Ascending aorta (tissue), 2 donors: ENCODE measurements at regions of chr6 and their contacts with region 1.

Region 1: GRCh38 chr6:25223490-25223991 is 55.6 kb upstream of the CARMIL1 start:
- DNase-seq: peak in 1 of 2 donors; percentile 76
- H3K4me3 ChIP-seq: peak overlapping the region; percentile 38 to 54
- H3K27ac ChIP-seq: no peak overlapping the region
- H3K4me1 ChIP-seq: no peaks in the 10 kb centered on the region
- H3K27me3 ChIP-seq: no peaks in the 10 kb centered on the region
- CTCF ChIP-seq: peak; percentile 79 to 92 (median 81)

Region 2: DNA sequence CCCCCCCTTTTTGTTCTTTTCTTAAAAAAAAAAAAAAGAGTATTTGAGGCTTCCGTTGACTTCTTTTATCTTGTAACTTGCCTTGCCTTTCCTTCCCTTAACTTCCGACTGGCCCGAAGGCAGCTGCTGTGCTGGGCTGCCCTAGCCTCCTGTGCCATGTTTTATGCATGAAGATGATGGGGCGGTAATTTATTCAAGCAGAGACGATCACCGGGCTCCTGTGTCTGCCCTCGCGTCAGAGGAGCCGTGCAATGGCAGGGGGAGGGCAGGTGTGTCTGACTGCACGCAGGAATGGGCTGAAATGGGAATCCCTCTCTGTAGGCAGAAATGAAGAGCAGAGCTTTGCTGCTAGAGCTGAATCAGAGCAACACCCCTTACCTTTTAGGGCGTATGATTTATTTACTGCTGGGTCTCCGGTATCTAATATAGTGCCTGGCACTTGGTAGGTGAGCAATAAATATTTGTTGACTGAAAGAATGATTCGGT is 181.5 kb before region 1 on chr6:
- intact Hi-C with region 1: no loop called
- DNase-seq: no peak
- H3K4me3 ChIP-seq: no peak overlapping the region
- H3K27ac ChIP-seq: no peak overlapping the region
- H3K4me1 ChIP-seq: no peaks in the 10 kb centered on the region
- H3K27me3 ChIP-seq: no peaks in the 10 kb centered on the region
- CTCF ChIP-seq: no peak

Region 3: DNA sequence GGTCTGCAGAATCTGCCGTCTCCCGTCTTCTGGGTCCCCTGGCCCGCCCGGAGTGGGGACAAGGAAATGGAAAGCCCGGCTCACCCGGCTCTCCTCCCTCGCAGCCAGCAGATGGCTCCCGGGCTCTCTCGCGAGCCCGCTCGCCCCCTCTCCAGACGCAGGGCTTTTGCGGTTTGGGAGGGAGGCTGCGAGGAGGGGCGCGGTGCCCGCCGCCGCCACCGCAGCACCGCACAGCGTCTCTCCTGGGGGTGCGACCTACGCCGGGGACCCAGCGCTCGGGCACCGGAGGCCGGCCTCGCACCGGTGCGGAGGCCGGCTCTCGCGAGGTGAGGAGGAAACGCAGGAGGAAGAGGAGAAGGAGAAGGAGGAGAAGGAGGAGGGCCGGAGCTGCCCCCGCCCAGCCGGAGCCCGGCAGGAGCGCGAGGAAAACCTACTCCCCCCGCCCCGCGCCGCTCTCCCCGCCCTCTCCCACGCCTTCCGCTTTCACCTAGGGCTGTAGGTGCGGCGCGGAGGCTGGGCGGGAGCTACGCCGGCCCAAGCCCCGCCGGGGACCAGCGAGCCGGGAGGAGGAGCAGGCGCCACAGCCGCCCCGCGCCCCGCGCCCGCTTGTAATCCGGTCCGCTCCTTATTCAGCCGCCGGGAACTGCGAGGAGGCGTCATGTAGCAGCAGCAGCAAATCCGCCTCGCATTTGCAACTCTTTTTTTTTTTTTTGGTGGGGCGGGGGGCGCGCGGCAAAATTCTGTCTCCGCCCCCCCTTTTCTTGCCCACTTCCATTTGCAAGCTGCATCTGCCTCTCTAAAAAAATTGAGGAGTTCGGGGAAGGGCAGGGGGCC is 55.6 kb after region 1 on chr6 and contains the start of gene CARMIL1:
- intact Hi-C with region 1: loop called (anchors 1 kb)
- DNase-seq: peak; percentile 24 to 88
- H3K4me3 ChIP-seq: peak within 1 kb of the TSS; percentile 67 to 89
- H3K27ac ChIP-seq: peak within 1 kb of the TSS; percentile 71 to 79
- H3K4me1 ChIP-seq: peaks cover 0 to 19% of the 10 kb centered on the region in 2 donors
- H3K27me3 ChIP-seq: no peaks in the 10 kb centered on the region
- CTCF ChIP-seq: peak; percentile 88 to 90 (median 89)
- total RNA-seq, gene CARMIL1: 16.1 TPM

Region 4: DNA sequence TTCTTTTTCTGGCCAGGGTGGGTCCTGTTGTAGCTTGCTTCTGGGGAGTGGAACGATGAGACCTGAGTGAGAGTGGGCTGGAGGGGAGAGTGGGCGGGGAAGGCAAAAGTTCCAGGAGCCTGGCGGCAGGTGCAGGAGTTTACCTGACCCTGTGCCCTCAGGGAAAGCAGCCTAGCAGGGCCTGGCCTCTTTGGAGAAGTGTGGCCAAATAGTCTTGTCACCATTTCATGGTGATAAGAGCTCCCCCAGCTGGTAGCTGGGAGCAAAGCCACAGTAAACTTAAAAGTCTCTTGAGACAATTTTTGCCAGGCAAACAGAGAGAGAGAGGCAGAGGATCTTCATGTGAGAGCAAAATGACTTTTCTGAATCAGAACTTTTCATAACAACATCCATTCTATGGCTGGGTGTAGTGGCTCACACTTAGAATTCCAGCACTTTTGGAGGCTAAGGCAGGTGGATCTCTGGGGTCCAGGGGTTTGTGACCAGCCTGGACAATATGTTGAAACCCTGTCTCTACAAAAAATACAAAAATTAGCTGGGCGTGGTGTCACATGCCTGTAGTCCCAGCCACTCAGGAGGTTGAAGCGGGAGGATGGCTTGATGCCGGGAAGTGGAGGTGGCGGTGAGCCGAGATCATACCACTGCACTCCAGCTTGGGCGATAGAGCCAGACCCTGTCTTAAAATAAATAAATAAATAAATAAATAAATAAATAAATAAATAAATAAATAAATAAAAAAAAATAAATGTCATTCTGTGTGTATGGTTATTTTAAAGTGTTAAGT is 266.7 kb after region 1 on chr6:
- intact Hi-C with region 1: loop called (anchors 2 kb)
- DNase-seq: peak; percentile 10 to 87
- H3K4me3 ChIP-seq: no peak overlapping the region
- H3K27ac ChIP-seq: peak overlapping the region in 1 of 2 donors; percentile 5
- H3K4me1 ChIP-seq: peaks cover 0 to 9% of the 10 kb centered on the region in 2 donors
- H3K27me3 ChIP-seq: no peaks in the 10 kb centered on the region
- CTCF ChIP-seq: peak; percentile 76 to 89 (median 78)

Region 5: GRCh38 chr6:25556516-25556915 is 333.0 kb after region 1 on chr6:
- intact Hi-C with region 1: loop called (anchors 2 kb)
- DNase-seq: peak in 1 of 2 donors; percentile 80
- H3K4me3 ChIP-seq: no peak overlapping the region
- H3K27ac ChIP-seq: no peak overlapping the region
- H3K4me1 ChIP-seq: no peaks in the 10 kb centered on the region
- H3K27me3 ChIP-seq: no peaks in the 10 kb centered on the region
- CTCF ChIP-seq: peak; percentile 34 to 77 (median 70)

Region 6: GRCh38 chr6:25717866-25718740 is 494.6 kb after region 1 on chr6:
- intact Hi-C with region 1: loop called (anchors 2 kb)
- DNase-seq: no peak
- H3K4me3 ChIP-seq: no peak overlapping the region
- H3K27ac ChIP-seq: no peak overlapping the region
- H3K4me1 ChIP-seq: no peaks in the 10 kb centered on the region
- H3K27me3 ChIP-seq: no peaks in the 10 kb centered on the region
- CTCF ChIP-seq: peak; percentile 14 to 57 (median 52)